ENCODE measurements at regions of chr5 and their contacts with region 1.

Region 1: DNA sequence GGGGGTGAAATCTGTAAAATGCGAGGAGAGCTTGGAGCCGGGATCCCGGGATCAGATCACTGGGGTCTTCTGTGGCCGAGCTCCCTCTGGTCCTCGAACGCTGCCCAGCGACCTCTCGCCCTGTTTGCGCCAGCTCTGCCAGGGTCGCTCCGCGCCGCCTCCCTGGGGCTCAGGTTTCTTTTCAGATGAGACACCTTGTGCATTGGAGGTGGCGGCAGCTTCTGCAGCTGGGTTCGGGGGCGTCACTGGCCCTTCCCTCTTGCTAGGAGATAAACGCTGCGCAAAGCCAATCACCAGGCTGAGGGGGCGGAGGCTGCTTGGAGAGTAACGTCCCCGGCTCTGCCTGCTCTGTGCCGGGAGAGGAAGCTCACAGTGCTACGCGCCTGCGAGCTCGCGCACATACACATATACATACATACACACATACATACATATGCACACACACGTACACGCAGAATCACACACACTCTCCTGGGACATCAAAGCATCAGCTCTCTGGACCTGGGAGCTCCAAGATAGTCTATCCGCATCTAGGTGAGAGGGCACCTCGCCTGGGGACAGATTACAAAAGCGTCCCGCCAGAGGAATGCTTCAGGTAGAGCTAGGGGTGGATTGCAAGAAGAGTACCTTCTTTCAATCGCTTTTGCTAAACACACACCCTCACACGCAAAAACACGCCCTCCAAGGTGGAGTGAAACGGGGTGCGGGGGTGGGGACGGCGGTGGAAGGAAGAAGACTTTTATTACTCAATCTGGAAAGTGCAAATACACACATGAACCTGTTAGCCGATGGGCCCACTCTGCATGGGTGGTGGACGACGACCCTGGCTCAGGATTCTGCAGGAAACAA is at the start of gene ST8SIA4:
- DNase-seq: peak; percentile 85
- ATAC-seq: peak; percentile 87
- H3K4me3 Mint-ChIP-seq: peak within 1 kb of the TSS; percentile 90
- H3K27ac Mint-ChIP-seq: no peak within 1 kb of the TSS
- H3K4me1 Mint-ChIP-seq: peaks cover 38% of the 10 kb centered on the region
- H3K27me3 Mint-ChIP-seq: peaks cover 68% of the 10 kb centered on the region
- CTCF ChIP-seq: no peak
- total RNA-seq, gene ST8SIA4: 0.76 to 1.3 TPM (median 0.96 TPM) in 3 replicates

Region 2: GRCh38 chr5:100790170-100790665 is 113.0 kb before region 1 on chr5:
- CTCF ChIA-PET with region 1: interaction called, 11 read pairs
- POLR2A ChIA-PET with region 1: no interaction called
- DNase-seq: peak; percentile 22
- ATAC-seq: peak; percentile 91
- H3K4me3 Mint-ChIP-seq: peak overlapping the region; percentile 17
- H3K27ac Mint-ChIP-seq: peak overlapping the region; percentile 9
- H3K4me1 Mint-ChIP-seq: peaks cover 22% of the 10 kb centered on the region
- H3K27me3 Mint-ChIP-seq: no peaks in the 10 kb centered on the region
- CTCF ChIP-seq: no peak

Region 3: DNA sequence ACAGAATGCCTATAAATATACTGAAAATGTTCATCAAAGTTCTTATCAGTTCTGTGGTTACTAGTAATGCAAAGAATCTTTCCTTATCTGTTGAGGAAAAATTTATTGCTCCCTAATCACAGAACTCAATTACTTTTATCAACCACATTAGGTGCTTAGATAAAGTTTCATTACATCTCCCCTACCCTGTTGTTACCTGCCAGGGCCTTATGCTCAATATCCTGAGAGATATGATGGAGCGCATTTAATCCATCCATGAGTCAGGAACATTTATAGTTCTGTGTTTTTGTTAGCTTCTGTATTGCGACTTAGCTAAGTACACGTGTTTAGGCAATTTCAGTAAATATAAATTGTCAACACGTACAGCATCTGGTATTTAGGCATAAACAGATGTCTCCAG is 164.2 kb after region 1 on chr5:
- CTCF ChIA-PET with region 1: no interaction called
- POLR2A ChIA-PET with region 1: no interaction called
- DNase-seq: no peak
- ATAC-seq: no peak
- H3K4me3 Mint-ChIP-seq: no peak overlapping the region
- H3K27ac Mint-ChIP-seq: no peak overlapping the region
- H3K4me1 Mint-ChIP-seq: no peaks in the 10 kb centered on the region
- H3K27me3 Mint-ChIP-seq: no peaks in the 10 kb centered on the region
- CTCF ChIP-seq: no peak

Region 4: DNA sequence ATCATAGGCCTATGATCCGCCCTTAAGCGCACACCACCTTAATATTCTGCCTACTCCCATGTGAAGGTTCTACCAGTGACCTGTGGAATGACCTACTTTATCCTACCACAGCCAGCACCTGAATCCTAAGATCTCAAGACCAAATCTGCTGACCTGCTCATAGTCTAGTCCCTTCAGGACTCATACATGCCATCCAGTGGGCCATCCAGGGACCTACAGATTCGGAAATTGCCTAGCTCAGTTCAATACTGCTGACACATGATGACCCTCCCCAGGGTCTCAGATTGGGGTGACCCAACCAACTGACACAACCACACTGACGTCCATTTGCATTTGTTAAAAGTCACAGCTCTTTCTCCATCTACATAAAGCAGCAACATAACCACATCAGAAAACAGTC is 443.6 kb after region 1 on chr5:
- CTCF ChIA-PET with region 1: interaction called, 13 read pairs
- POLR2A ChIA-PET with region 1: no interaction called
- DNase-seq: no peak
- ATAC-seq: peak; percentile 86
- H3K4me3 Mint-ChIP-seq: no peak overlapping the region
- H3K27ac Mint-ChIP-seq: no peak overlapping the region
- H3K4me1 Mint-ChIP-seq: peaks cover 8% of the 10 kb centered on the region
- H3K27me3 Mint-ChIP-seq: no peaks in the 10 kb centered on the region
- CTCF ChIP-seq: no peak

Measured in WTC11 (cell line).